ENCODE measurements at regions of chr9 and their contacts with region 1.

Region 1: GRCh38 chr9:36873247-36873875 is 160.7 kb downstream of the PAX5 start:
- DNase-seq: peak in 8 of 10 donors; percentile 46 to 91 (median 67)

Region 2: DNA sequence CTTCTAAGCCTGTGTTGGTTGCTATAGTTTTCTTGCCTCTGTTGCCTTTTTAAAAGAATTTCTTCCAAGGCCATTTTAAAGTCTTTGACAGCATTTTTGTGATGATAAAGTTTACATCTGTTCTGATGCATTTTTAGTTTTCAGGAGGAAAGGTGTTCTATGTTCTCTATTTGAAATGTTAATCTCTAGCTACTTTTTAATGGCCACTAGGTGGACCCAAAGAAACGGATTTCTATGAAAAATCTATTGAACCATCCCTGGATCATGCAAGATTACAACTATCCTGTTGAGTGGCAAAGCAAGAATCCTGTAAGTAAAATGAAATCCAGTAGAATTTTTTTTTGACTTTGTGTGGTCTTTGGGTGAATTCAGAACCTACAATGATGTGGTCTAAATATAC is 240.5 kb before region 1 on chr9:
- intact Hi-C with region 1: loop called (anchors 10 kb)
- DNase-seq: no peak

Region 3: GRCh38 chr9:37271679-37272078 is 398.3 kb after region 1 on chr9:
- intact Hi-C with region 1: loop called (anchors 10 kb)
- DNase-seq: no peak

Measured in posterior cingulate gyrus (tissue), 11 donors.